Activated naive CD4-positive, alpha-beta T cell treated with anti-CD3 and anti-CD28 coated beads for 36 hours (primary cell): ENCODE measurements at regions of chr10 and their contacts with region 1.

Region 1: GRCh38 chr10:97334370-97335175 is at the start of gene FRAT2:
- DNase-seq: peak; percentile 87
- H3K4me3 Mint-ChIP-seq: peak within 1 kb of the TSS; percentile 75
- H3K27ac Mint-ChIP-seq: peak within 1 kb of the TSS; percentile 86
- H3K4me1 Mint-ChIP-seq: peaks cover 32% of the 10 kb centered on the region
- H3K27me3 Mint-ChIP-seq: no peaks in the 10 kb centered on the region
- total RNA-seq, gene FRAT2: 5.1 to 5.6 TPM

Region 2: GRCh38 chr10:96890172-96890513 is 444.4 kb before region 1 on chr10:
- CTCF ChIA-PET with region 1: no interaction called
- intact Hi-C with region 1: no loop called
- DNase-seq: no peak
- H3K4me3 Mint-ChIP-seq: no peak overlapping the region
- H3K27ac Mint-ChIP-seq: no peak overlapping the region
- H3K4me1 Mint-ChIP-seq: peaks cover 34% of the 10 kb centered on the region
- H3K27me3 Mint-ChIP-seq: no peaks in the 10 kb centered on the region

Region 3: DNA sequence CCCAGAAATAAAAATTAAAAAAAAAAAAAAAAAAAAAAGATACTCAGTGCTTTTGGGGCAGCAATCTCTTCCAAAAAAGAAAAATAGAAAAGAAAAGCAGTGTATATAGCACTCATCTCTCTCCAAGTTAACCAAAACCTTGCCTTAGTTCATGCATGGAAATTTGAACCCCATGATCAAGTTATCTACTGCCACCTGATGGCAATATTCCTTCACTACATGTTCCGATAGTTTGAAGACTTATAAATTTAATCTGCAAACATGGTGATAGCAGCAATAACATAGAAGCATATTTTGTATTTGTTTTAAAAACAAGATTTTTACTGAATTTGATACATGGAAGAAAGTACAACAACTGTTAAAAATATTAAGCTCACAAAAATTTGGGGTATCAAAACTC is 100.2 kb before region 1 on chr10:
- CTCF ChIA-PET with region 1: no interaction called
- intact Hi-C with region 1: loop called (anchors 2 kb)
- DNase-seq: no peak
- H3K4me3 Mint-ChIP-seq: no peak overlapping the region
- H3K27ac Mint-ChIP-seq: no peak overlapping the region
- H3K4me1 Mint-ChIP-seq: peaks cover 19% of the 10 kb centered on the region
- H3K27me3 Mint-ChIP-seq: no peaks in the 10 kb centered on the region

Region 4: DNA sequence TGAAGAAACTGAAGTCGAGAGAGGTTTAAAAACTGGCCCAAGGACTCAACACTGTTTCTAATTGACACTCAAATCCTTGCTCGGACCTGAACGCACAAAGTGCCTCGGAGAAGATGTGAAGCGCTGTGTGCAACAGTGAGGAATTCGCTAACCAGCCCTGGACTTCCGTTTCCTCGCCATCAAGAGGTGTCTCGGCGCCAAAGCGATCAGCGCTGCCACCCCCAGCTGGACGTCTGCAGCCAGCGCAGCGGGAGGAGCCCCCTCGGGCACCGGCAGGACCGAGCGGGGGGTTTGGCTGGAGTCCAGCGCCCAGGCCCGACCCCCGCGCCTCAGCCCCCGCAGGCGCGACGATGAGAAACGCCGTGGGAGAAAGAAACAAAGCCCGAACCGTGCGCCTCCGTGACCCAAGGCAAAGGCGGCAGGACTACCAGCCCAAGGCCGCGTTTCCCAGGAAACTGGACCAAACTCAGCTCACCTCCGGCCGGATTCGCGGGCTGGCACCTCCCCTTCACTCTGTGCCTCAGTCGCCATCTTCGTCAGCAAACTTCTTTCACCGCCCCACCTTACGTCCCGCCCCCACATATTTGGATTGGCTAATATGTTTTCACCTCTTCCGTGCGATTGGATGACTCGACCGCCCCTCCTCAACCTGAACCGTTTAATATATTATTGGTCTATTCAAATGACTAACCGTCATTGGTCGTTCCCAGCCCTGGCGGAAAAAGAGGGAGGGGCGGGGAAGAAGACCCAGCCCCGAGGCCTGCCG is 42.3 kb before region 1 on chr10 and contains the start of gene ARHGAP19:
- CTCF ChIA-PET with region 1: interaction called, 4 read pairs
- intact Hi-C with region 1: loop called (anchors 1 kb)
- DNase-seq: peak; percentile 98
- H3K4me3 Mint-ChIP-seq: peak within 1 kb of the TSS; percentile 91
- H3K27ac Mint-ChIP-seq: peak within 1 kb of the TSS; percentile 88
- H3K4me1 Mint-ChIP-seq: peaks cover 23% of the 10 kb centered on the region
- H3K27me3 Mint-ChIP-seq: no peaks in the 10 kb centered on the region
- total RNA-seq, gene ARHGAP19: 76.7 to 91.9 TPM

Region 5: DNA sequence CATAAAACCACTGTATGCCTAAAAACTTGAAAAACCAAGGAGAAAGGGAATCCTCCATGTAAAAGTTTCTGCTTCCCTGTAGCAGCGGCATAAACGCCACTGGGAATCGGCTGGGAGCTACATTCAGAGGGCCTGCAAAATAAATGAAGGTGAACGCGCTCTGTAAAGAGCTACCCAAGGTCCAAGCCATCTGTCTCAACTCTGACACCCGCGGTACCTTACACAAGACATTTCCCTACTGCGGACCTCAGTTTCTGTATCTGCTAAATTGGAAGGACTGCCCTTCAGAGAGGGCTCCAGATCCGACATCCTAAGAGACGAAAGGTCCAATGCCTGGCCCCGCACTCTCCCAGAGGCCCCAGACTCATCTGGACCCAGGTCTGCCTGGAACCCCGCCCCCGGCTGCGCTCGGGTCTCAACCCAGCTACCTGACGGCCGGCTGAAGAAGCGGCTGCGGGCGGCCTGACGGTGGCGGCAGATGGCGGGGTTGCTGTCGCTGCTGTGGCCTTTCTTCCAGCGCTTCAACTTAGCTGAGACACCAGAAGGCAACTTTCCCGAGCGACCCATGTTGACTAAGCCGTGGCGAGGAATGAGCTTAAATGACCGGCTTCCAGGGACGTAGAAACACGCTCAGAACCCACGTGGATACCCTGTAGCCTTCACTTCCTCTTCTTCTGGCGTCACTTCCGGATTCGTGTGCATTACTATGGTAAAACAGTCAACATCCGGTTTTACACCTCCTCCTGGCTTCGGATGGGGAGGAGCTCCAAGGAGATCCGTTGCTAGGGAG is 66.3 kb after region 1 on chr10 and contains the start of gene RRP12:
- CTCF ChIA-PET with region 1: no interaction called
- intact Hi-C with region 1: loop called (anchors 1 kb)
- DNase-seq: peak; percentile 92
- H3K4me3 Mint-ChIP-seq: peak within 1 kb of the TSS; percentile 92
- H3K27ac Mint-ChIP-seq: peak within 1 kb of the TSS; percentile 83
- H3K4me1 Mint-ChIP-seq: peaks cover 15% of the 10 kb centered on the region
- H3K27me3 Mint-ChIP-seq: no peaks in the 10 kb centered on the region
- total RNA-seq, gene RRP12: 51.0 to 55.2 TPM

Region 6: GRCh38 chr10:97425964-97426775 is 91.6 kb after region 1 on chr10 and contains the start of gene PGAM1:
- CTCF ChIA-PET with region 1: no interaction called
- intact Hi-C with region 1: loop called (anchors 1 kb)
- DNase-seq: peak; percentile 95
- H3K4me3 Mint-ChIP-seq: peak within 1 kb of the TSS; percentile 90
- H3K27ac Mint-ChIP-seq: peak within 1 kb of the TSS; percentile 98
- H3K4me1 Mint-ChIP-seq: peaks cover 50% of the 10 kb centered on the region
- H3K27me3 Mint-ChIP-seq: no peaks in the 10 kb centered on the region
- total RNA-seq, gene PGAM1: 1,371 to 1,393 TPM

Region 7: GRCh38 chr10:97623277-97623676 is 288.7 kb after region 1 on chr10:
- CTCF ChIA-PET with region 1: no interaction called
- intact Hi-C with region 1: no loop called
- DNase-seq: no peak
- H3K4me3 Mint-ChIP-seq: no peak overlapping the region
- H3K27ac Mint-ChIP-seq: no peak overlapping the region
- H3K4me1 Mint-ChIP-seq: no peaks in the 10 kb centered on the region
- H3K27me3 Mint-ChIP-seq: no peaks in the 10 kb centered on the region